ENCODE measurements at regions of chr3 and their contacts with region 1.

Region 1: DNA sequence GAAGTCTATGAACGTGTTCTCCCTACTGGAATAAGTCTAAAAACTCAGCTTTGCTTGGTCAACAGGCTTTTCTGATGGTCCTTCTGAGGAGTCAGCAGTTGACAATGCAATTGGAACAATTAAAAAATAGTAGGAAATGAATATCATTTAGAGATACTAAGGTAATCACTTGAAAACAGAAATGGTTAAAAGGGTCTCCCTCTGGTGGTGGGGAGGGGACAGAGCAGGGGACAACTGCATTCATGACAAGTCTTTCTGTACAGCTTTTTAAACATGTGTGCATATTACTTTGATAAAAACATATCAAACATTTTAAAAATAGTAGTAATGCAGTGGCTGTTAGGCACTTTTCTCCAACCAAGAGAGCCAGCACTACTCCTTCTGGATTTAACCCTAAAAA is 119.9 kb upstream of the FHIT start:
- DNase-seq: peak in 1 of 2 experiments; percentile 46
- H3K4me3 ChIP-seq: no peak overlapping the region
- H3K4me3 Mint-ChIP-seq: no peak overlapping the region
- H3K27ac Mint-ChIP-seq: no peak overlapping the region
- H3K4me1 ChIP-seq: no peaks in the 10 kb centered on the region
- H3K4me1 Mint-ChIP-seq: no peaks in the 10 kb centered on the region
- H3K27me3 ChIP-seq: no peaks in the 10 kb centered on the region
- H3K27me3 Mint-ChIP-seq: no peaks in the 10 kb centered on the region
- CTCF ChIP-seq: peak; percentile 67 to 76

Region 2: GRCh38 chr3:60841363-60841762 is 529.8 kb before region 1 on chr3:
- CTCF ChIA-PET with region 1: no interaction called
- POLR2A ChIA-PET with region 1: no interaction called
- intact Hi-C with region 1: loop called (anchors 10 kb)
- DNase-seq: peak; percentile 66 to 69
- H3K4me3 ChIP-seq: no peak overlapping the region
- H3K4me3 Mint-ChIP-seq: no peak overlapping the region
- H3K27ac Mint-ChIP-seq: no peak overlapping the region
- H3K4me1 ChIP-seq: peaks cover 5% of the 10 kb centered on the region; the same call in 1 of the 2 replicates
- H3K4me1 Mint-ChIP-seq: no peaks in the 10 kb centered on the region
- H3K27me3 ChIP-seq: no peaks in the 10 kb centered on the region
- H3K27me3 Mint-ChIP-seq: no peaks in the 10 kb centered on the region
- CTCF ChIP-seq: no peak

Region 3: DNA sequence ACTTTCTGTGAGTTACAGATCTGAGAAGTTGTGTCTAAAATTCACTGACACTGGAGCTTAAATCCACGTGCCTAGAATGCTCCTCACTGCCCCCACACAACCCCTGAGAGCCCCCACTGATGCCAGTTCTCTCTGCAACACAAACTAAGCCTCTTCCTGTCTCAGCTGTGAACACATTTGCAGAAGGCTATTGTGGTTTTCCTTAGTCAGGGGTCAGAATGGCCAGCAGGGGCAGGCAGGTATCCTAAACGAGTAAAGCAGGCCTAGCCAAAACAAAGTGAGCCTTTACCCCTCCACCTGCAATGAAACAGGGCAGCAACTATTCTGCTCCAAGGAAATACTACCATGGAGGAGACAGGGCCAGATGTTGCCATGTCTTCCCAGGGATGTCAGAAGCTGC is 198.4 kb before region 1 on chr3:
- CTCF ChIA-PET with region 1: no interaction called
- POLR2A ChIA-PET with region 1: no interaction called
- intact Hi-C with region 1: loop called (anchors 5 kb)
- DNase-seq: peak; percentile 37 to 40
- H3K4me3 ChIP-seq: no peak overlapping the region
- H3K4me3 Mint-ChIP-seq: no peak overlapping the region
- H3K27ac Mint-ChIP-seq: no peak overlapping the region
- H3K4me1 ChIP-seq: peaks cover 7% of the 10 kb centered on the region; the same call in 1 of the 2 replicates
- H3K4me1 Mint-ChIP-seq: peaks cover 11% of the 10 kb centered on the region
- H3K27me3 ChIP-seq: no peaks in the 10 kb centered on the region
- H3K27me3 Mint-ChIP-seq: no peaks in the 10 kb centered on the region
- CTCF ChIP-seq: peak in 1 of 2 experiments; percentile 68